ENCODE measurements at regions of chr13 and their contacts with region 1.

Region 1: DNA sequence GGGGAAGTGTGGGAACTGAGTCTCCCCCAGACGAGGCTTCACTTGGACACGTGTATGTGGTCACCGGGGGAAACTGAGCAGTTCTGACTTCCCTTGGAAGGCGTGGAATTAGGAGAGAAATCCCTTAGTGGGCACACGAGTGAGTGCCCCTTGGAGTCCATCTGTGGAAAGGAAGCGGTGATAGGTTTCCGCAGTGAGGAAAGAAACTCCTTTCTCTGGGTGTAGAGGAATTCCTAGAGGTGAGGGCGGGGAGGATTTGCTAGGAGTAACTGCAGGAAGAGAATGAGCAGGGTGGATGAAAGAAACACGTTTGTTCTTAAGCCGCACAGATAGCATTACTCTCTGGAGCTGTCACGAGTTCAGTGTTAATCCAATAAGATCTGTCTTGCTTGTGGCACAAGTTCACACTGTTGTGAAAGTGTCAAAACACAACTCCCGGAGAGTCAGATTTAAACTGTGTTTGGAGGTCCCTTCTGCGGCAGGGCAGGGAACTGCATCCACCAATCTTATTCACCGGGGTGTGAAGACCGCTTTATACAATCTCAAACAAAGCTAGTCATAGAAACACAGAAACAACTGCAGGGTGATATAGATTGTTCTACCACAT is 1.2 kb downstream of the KL start:
- DNase-seq: peak; percentile 28
- H3K4me3 Mint-ChIP-seq: peak overlapping the region; percentile 62
- H3K27ac Mint-ChIP-seq: peak overlapping the region; percentile 36
- H3K4me1 Mint-ChIP-seq: peaks cover 20% of the 10 kb centered on the region
- H3K27me3 Mint-ChIP-seq: peaks cover 62% of the 10 kb centered on the region

Region 2: DNA sequence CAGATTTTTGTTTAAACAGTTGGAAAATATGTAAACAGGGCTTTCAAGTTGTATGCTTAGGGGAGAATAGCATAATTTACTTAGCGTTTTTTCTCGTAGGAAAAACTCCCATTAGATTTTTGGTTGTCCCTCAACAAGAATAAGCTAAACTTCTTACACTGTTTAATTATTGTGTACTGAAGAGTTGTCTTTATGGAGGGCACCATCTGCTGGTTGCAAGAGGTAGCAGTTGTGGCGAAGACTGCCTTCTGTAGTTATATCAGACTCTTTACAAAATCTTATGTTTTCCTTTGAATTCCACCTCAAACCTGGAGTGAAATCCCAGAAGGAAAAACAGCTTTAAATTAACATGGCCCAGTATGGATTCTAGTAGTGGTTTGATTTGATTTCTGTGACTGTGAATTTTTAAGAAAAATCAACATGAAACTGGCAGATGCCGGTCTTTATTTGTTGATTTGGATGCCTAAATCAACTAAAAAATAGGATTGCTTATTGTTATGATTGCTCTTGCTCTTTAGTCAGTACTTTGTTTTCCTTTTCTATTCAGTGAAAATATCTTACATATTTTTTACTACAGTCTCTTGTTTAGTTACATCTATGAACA is 377.8 kb before region 1 on chr13:
- intact Hi-C with region 1: loop called (anchors 5 kb)
- DNase-seq: no peak
- H3K4me3 Mint-ChIP-seq: no peak overlapping the region
- H3K27ac Mint-ChIP-seq: no peak overlapping the region
- H3K4me1 Mint-ChIP-seq: peaks cover 29% of the 10 kb centered on the region
- H3K27me3 Mint-ChIP-seq: no peaks in the 10 kb centered on the region

Region 3: DNA sequence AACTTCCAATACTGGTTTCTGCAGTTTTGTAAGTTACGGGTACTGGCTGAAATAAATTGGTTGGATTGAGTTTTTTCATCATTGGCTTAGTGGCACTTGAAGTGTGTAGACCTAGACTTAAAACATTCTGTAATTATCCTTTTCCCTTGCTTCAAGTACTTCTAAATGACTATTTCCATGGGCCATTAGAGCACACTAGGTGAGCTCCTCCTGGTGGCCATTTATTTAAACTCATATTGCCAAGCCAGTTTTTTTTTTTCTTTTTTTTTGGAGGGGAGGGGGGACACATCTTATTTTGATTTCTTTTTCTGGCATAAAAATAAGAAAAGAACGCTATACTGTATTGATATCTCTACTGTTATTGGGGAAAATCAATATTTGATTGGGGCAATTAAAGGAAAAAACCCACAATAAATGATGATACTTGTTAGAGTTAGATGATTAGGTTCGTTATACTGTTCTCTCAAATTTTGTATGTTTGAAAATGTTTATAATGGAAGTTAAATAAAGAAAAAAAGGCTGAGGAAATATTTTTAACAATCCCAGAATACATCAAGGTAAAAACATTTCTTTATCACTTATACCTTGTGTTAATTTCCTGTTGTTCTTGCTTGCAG is 348.3 kb before region 1 on chr13:
- intact Hi-C with region 1: loop called (anchors 10 kb)
- DNase-seq: no peak
- H3K4me3 Mint-ChIP-seq: no peak overlapping the region
- H3K27ac Mint-ChIP-seq: no peak overlapping the region
- H3K4me1 Mint-ChIP-seq: peaks cover 2% of the 10 kb centered on the region
- H3K27me3 Mint-ChIP-seq: no peaks in the 10 kb centered on the region

Region 4: DNA sequence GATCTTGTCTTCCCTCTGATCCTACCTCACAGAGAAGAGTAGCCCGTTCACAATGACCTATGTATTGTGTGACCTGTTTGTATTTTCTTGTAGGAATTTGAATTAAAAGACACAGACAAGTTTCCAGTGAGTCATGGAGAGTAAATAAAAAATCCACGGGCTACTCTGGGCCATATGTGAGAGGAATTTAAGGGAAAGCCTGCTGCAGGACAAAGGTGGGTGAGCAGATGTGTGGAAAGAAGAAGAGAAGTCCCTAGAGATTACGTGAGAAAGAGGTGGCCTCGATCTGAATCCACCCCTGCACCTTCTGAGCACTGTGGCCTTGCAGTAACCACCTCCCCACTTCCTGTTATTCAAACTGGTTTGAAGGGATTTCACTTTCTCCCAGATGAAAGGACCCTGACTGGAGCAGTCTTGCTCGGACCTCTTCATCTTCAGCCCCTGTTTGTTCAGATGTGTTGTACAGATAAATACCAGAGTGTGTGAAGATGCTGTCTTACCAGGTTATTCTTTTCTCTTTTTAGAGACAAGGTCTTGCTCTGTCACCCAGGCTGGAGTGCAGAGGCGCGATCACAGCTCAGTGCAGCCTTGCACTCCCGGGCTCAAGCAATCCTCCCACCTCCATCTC is 225.8 kb before region 1 on chr13:
- intact Hi-C with region 1: loop called (anchors 5 kb)
- DNase-seq: peak; percentile 36
- H3K4me3 Mint-ChIP-seq: no peak overlapping the region
- H3K27ac Mint-ChIP-seq: peak overlapping the region; percentile 7
- H3K4me1 Mint-ChIP-seq: peaks cover 32% of the 10 kb centered on the region
- H3K27me3 Mint-ChIP-seq: no peaks in the 10 kb centered on the region

Region 5: GRCh38 chr13:32917504-32917903 is 99.9 kb before region 1 on chr13:
- intact Hi-C with region 1: loop called (anchors 2 kb)
- DNase-seq: no peak
- H3K4me3 Mint-ChIP-seq: no peak overlapping the region
- H3K27ac Mint-ChIP-seq: peak overlapping the region; percentile 53
- H3K4me1 Mint-ChIP-seq: peaks cover 26% of the 10 kb centered on the region
- H3K27me3 Mint-ChIP-seq: no peaks in the 10 kb centered on the region